ENCODE measurements at regions of chr11 and their contacts with region 1.

Region 1: DNA sequence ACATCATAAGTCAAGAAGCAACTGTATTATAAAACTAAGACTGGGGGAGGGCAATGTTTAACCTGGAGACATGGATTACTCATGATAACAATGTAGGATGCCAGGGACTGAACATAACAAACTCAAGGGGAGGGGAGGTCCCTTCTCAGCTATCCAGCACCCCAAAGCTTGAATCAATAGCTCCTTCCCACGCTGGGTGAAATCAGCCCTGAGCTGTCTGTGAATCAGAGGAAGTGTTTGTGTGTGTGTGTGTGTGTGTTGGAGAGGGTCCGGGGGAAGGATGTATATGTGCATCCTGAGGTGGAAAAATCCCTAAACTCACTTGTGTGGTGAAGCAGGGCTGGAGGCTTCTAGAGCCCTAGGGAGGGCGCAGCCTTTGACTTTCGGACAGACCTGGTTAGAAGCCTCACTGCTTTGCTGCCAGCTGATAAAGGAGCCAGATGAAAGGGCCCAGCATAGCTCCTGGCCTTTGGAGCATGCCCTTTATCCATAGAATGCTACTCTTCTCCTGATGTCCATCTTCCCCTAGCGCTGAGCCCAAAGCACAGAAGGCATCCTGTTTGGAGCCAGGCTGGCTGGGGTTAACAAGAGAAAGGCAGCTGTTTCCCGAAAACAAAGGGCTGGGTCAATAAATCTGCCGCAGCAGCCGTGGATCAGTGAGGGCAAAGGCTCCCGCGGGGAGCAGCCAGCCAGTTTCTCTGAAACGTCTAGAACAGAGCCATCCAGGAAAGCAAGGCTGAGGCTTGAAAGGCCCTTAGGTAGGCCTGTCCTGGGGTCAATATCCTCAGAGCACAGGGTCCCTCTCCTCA is 35.8 kb downstream of the TNKS1BP1 start:
- DNase-seq: peak; percentile 94
- H3K4me3 ChIP-seq: no peak overlapping the region
- H3K27ac ChIP-seq: peak overlapping the region; percentile 74
- H3K4me1 ChIP-seq: peaks cover 24% of the 10 kb centered on the region
- H3K27me3 ChIP-seq: no peaks in the 10 kb centered on the region
- CTCF ChIP-seq: no peak
- POLR2A ChIP-seq: peak; percentile 40

Region 2: GRCh38 chr11:57237204-57237681 is 51.7 kb before region 1 on chr11 and contains the start of gene APLNR:
- CTCF ChIA-PET with region 1: no interaction called
- POLR2A ChIA-PET with region 1: no interaction called
- dilution Hi-C with region 1: no loop called
- intact Hi-C with region 1: no loop called
- DNase-seq: no peak
- H3K4me3 ChIP-seq: no peak within 1 kb of the TSS
- H3K27ac ChIP-seq: no peak within 1 kb of the TSS
- H3K4me1 ChIP-seq: no peaks in the 10 kb centered on the region
- H3K27me3 ChIP-seq: peaks cover 47 to 53% of the 10 kb centered on the region in 2 experiments
- CTCF ChIP-seq: no peak
- POLR2A ChIP-seq: no peak
- total RNA-seq, gene APLNR: 0.09 and 0.38 TPM in 2 replicates

Region 3: DNA sequence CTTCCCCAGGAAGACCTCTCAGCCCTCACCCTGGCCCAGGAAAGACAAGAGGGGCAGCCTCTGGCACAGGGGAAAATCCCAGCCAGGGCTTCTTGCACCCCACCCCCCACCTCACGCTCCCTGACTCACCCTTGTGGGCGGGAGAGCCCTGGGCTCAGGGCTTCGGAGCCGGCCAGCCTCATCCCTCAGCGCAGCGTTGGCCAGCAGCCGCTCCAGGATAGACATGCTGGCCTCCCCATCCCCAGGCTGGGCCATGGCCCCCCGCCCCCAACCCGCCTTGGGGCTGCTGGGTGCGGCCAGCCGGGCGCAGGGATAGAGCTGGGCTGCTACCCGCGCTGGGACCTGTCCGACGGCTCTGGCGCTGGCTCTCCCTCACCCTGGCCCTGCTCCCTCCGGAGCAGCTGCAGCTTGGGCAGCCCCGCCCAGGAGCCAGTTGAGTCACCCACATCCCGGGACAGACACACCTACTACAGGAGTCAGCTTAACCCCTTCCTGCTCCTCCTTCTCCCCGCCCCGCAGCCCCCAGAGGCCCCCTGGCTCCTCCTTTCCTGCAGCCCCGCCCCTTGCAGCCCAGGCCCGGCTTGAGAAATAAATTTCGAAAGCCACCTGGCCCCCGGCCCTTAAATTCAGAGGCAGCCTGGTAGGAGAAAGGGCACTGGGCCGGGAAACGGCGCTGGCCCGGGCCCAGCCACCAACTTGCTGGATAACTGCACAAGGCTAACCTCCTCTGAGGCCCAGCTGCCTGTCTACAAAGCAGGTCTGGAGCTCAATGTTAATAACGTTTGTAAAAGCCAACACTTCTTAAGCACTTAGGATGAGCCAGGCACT is 22.3 kb after region 1 on chr11:
- CTCF ChIA-PET with region 1: interaction called, 5 read pairs
- POLR2A ChIA-PET with region 1: interaction called, 9 read pairs
- dilution Hi-C with region 1: no loop called
- intact Hi-C with region 1: loop called (anchors 1 kb)
- DNase-seq: peak; percentile 96
- H3K4me3 ChIP-seq: peak overlapping the region; percentile 0 to 56 (median 24)
- H3K27ac ChIP-seq: peak overlapping the region; percentile 53
- H3K4me1 ChIP-seq: peaks cover 18% of the 10 kb centered on the region
- H3K27me3 ChIP-seq: no peaks in the 10 kb centered on the region
- CTCF ChIP-seq: no peak
- POLR2A ChIP-seq: peak; percentile 81